Activated T-helper 1 cell treated with anti-CD3 and anti-CD28 coated beads, Interleukin-12 subunit alpha, Interleukin-12 subunit beta, Interleukin-2, Interleukin-4 antibody, amounts not matched to agents 30 ng/mL and 10 ng/mL and 1 ng/mL, durations not matched to agents 14 hours and 24 hours and 36 hours (primary cell): ENCODE measurements at regions of chr2 and their contacts with region 1.

Region 1: DNA sequence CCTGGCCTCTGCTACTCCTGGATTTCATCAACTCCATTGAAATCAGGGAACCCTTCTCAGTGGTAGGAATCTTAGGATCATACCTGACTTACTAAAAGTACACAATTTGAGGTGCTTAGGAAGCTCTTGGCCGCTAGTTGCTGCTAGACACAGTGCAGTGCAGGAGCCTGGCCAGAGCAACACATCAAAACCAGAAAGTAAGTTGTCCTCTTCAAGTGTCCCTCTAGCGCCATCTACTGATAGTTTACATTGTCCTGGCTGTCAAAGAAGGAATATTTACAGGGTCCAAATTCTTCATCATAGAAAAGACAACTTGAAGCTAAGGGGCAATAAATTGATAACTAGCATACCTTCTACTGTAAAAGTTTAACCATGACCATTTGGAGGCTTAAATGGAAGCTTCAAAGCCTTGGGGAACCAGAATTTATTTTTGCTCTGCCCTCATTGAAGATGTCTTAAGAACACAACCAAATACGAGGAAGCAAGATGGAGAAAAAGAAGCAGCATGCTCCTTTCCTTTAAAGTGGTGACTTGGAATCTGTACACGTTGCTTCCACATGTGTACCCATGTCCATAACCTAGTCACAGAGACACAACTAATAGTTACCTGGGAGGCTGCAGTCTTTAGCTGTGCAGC is 889.1 kb upstream of the GCFC2 start:
- DNase-seq: no peak
- H3K4me3 Mint-ChIP-seq: no peak overlapping the region
- H3K27ac Mint-ChIP-seq: no peak overlapping the region
- H3K4me1 Mint-ChIP-seq: no peaks in the 10 kb centered on the region
- H3K27me3 Mint-ChIP-seq: no peaks in the 10 kb centered on the region

Region 2: DNA sequence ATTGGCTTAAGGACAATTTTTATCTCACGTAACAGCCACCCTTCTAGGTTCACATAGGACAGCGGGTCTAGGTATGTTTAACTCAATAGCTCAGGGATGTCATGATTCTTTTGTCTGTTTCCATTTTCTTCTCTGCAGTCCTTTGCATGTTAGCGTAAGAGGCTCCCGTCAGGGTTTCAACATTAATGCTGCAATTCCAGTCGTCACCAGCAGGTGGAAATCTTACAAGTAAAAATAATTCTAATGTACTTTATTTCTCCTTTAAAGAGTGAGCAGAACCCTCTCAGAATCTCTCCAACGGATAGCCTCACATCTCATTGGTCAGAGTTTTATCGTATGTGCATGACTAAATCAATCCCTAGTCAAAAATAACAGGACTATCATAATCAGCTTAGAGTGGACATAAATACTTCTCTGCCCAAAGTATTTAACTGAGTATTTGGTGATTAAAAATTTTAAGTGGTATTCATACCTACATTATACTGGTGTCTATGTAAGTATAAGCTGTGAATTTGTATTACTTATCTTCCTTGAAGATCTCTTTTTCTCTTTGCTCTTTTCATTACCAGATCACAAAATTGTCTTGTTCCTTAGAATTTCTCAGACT is 401.9 kb before region 1 on chr2:
- intact Hi-C with region 1: loop called (anchors 1 kb)
- DNase-seq: no peak
- H3K4me3 Mint-ChIP-seq: no peak overlapping the region
- H3K27ac Mint-ChIP-seq: no peak overlapping the region
- H3K4me1 Mint-ChIP-seq: no peaks in the 10 kb centered on the region
- H3K27me3 Mint-ChIP-seq: no peaks in the 10 kb centered on the region

Region 3: DNA sequence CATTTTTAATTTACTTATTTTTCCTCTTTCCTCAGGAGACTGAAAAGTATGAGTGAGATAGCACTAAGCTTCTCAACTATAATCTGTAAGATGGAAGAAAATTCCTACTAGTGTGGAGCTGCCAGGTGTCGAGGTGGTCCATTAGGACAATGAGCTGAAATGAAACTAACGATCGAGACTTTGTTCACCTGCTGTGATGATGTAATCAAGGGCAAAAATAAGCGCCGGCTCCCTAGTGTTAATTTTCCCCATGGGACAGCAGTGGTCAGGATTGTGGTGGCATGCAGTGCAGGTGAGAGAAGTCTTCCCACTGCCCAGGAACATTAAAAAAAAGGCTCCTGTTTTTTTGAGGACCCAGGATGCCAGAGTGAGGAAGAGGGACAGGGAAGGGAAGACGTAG is 30.0 kb before region 1 on chr2:
- intact Hi-C with region 1: no loop called
- DNase-seq: no peak
- H3K4me3 Mint-ChIP-seq: no peak overlapping the region
- H3K27ac Mint-ChIP-seq: no peak overlapping the region
- H3K4me1 Mint-ChIP-seq: no peaks in the 10 kb centered on the region
- H3K27me3 Mint-ChIP-seq: no peaks in the 10 kb centered on the region

Region 4: GRCh38 chr2:76946631-76947145 is 346.8 kb after region 1 on chr2:
- intact Hi-C with region 1: no loop called
- DNase-seq: no peak
- H3K4me3 Mint-ChIP-seq: no peak overlapping the region
- H3K27ac Mint-ChIP-seq: no peak overlapping the region
- H3K4me1 Mint-ChIP-seq: no peaks in the 10 kb centered on the region
- H3K27me3 Mint-ChIP-seq: no peaks in the 10 kb centered on the region